Ovary (tissue), 10 donors: ENCODE measurements at regions of chr3 and their contacts with region 1.

Region 1: DNA sequence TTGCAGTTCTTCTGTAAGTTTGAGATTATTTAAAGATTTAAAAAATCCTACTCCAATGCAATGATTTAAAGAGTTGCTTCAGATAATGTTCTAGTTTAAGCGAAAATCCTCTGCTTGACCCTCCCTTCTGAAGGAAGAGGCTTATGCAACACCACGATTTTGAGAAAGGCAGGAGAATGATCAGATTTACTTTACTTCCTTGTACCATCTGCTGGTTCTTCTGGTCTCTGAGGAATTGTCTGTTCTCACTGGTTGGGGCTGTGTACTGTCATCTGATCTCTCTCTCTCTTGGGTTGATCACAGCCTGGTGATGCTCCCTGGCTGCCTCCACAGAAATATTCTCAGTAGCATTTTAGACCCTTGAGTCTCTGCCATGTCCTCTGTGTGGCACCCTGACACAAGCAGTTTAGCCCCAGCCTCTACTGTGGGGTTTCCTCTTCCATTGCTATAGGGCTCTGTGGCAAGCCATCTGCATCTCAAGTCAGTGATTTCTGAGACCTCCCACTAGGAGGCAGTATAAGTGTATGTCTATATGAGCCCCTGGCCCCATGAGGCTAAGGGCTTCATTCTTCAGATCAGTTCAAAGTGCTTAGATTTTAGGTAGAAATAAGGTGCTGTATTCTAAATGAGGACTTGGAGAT is 50.8 kb upstream of the PLAAT1 start:
- DNase-seq: no peak
- H3K4me3 ChIP-seq: no peak overlapping the region
- H3K27ac ChIP-seq: no peak overlapping the region
- H3K4me1 ChIP-seq: no peaks in the 10 kb centered on the region
- H3K27me3 ChIP-seq: no peaks in the 10 kb centered on the region
- CTCF ChIP-seq: no peak
- EP300 ChIP-seq: no peak
- POLR2A ChIP-seq: no peak

Region 2: GRCh38 chr3:192284443-192285087 is 905.7 kb before region 1 on chr3:
- intact Hi-C with region 1: loop called in 1 of 4 experiments (anchors 10 kb)
- DNase-seq: no peak
- H3K4me3 ChIP-seq: no peak overlapping the region
- H3K27ac ChIP-seq: no peak overlapping the region
- H3K4me1 ChIP-seq: no peaks in the 10 kb centered on the region
- H3K27me3 ChIP-seq: no peaks in the 10 kb centered on the region
- CTCF ChIP-seq: no peak
- EP300 ChIP-seq: no peak
- POLR2A ChIP-seq: no peak